ENCODE measurements at regions of chr1 and their contacts with region 1.

Region 1: DNA sequence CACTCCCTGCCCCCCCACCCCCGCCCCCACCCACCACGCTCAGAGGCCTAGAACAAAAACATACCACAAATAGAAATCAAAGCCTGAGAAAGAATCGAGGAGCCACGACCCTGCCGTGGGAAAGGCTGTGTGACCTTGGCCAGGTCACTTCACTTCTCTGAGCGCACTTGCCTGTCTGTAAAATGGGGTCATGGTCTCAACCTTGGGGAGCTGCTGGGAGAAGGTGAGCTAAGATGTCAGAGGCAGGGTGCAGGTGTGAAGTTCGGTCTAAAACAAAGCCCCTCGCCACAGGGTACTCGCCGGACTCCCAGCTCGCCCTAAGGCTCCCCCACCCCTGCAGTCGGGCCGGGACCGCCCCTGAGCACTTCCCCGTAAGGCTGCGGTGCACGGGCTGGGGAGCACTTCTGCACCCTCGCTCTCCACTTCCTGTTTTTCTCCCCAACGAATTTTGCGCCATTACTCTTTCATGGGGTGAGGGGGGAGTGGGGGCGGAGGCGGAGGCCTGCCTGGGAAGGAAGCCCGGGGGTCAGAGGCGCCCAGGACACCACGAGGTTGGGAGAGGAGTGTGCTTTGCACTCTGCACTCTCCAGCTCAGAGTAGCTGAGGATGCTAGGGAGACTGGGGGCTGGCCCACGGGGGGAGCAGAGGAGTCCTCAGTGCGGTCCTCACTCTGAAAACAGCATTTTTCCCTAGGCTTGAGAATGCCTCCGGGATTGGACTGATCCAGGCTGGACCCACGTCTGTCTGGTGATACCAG is 21.9 kb upstream of the PIK3CD start:
- DNase-seq: no peak
- H3K4me3 ChIP-seq: no peak overlapping the region
- CTCF ChIP-seq: no peak

Region 2: GRCh38 chr1:8873506-8874229 is 756.0 kb before region 1 on chr1:
- CTCF ChIA-PET with region 1: no interaction called
- POLR2A ChIA-PET with region 1: no interaction called
- DNase-seq: peak; percentile 86
- H3K4me3 ChIP-seq: peak overlapping the region; percentile 30
- CTCF ChIP-seq: no peak

Region 3: DNA sequence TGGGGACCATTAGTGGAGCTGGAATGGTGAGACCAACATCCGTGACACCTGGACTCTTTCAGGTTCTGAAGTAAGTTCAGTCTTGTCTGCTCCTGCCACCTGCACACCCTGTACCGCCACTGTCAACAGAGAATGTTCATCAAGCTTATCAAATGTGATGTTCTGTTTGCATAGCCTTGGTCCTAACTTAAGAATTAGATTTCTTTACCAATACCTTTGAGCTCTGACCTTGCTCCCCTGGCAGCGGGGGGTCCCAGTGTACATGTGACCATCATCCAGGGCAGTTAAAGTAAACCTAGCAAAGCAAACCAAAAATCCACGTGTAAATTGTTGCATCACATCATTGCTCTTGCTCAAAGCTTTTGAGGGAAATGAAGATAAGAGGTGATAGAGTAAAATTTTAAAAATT is 75.9 kb before region 1 on chr1:
- CTCF ChIA-PET with region 1: no interaction called
- POLR2A ChIA-PET with region 1: no interaction called
- DNase-seq: no peak
- H3K4me3 ChIP-seq: no peak overlapping the region
- CTCF ChIP-seq: no peak

Region 4: DNA sequence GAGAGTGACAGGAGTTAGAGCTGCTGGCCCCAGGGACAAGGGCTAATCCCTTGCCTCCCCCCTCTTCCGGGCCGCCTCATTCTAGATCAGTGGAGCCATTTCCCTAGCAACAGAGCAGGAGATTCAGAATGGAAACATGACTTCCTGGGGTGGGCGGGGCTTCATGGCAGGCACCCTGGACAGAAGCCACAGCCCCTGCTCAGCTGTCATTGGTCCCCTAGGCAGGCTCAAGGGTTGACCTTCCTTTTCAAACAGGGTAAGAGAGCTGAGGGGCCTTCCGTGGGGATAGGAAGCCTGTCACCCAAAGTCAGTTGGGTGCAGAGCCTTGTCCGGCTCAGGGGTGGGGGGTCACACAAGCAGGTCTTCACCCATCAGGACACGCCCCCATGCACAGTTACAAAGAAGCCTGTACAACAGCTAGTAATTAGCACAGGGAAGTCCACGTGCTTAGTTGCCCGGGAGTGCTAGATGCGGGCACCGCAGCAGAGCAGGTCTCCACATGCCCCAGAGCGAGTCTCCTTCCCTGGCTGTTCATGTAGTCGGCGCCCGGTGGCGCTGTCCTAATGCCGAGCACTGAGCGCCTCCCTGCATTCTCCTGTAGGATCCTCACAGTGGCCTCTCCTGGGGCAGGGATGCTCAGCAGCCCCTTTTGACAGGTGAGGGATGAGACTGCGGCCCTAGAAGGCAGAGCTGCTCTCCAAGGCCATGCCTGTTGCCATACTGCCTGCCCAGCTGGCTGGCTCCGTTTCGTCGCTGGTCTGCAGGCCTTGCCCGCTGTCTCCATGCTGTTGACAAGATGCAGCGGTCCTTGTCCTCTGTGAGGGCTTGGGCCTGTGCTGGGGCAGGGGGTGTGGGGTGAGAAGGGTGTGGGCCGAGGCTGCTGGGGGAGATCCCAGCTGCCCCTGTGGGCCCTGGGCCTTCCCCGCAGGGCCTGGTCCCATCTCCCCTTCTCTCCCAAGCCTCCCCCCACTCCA is 35.8 kb before region 1 on chr1:
- CTCF ChIA-PET with region 1: interaction called, 10 read pairs
- POLR2A ChIA-PET with region 1: no interaction called
- DNase-seq: peak; percentile 9
- H3K4me3 ChIP-seq: no peak overlapping the region
- CTCF ChIP-seq: no peak

Region 5: DNA sequence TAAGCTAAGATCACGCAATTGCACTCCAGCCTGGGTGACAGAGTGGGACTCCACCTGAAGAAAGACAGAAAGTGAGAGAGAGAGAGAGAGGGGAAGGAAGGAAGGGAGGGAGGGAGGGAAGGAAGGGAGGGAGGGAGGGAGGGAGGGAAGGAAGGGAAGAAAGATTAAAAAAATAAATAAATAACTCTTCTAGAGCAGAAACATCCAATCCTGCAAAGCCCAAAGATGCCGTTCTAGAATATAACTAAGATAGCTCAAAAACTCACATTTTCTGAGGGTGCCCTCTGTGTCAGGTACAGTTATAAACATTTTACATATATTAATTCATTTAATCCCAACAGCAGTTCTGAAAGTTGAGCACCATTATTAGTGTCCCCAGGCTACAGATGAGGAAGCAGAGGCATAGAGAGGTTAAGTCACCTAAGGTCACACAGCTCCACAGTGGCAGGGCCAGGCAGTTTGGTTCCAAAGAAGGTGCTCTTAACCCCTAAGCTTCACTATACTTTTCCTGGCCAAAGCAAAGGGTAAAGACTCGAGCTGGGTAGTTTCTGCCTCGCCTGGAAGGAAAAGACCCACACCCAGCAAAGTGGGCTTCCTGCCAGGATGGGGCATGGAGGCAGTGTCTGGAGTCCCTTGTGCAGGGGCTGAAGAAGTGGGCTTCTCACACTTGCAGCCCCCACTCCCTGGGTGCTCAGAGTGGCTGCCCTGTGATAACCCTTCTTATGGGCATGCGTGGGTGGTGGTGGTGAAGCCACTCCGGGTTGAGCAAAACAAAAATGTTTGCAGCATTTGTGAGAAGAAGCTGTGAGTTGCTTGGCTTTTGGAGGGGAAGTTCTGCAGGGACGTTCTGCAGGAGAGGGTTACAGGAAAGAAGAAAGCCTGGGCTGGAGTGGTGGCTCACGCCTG is 14.0 kb after region 1 on chr1:
- CTCF ChIA-PET with region 1: interaction called, 122 read pairs
- POLR2A ChIA-PET with region 1: no interaction called
- DNase-seq: no peak
- H3K4me3 ChIP-seq: no peak overlapping the region
- CTCF ChIP-seq: no peak

Region 6: GRCh38 chr1:9689011-9689706 is 59.5 kb after region 1 on chr1:
- CTCF ChIA-PET with region 1: interaction called, 29 read pairs
- POLR2A ChIA-PET with region 1: no interaction called
- DNase-seq: no peak
- H3K4me3 ChIP-seq: peak overlapping the region; percentile 71
- CTCF ChIP-seq: no peak

Region 7: GRCh38 chr1:9717193-9718005 is 87.8 kb after region 1 on chr1:
- CTCF ChIA-PET with region 1: interaction called, 34 read pairs
- POLR2A ChIA-PET with region 1: no interaction called
- DNase-seq: no peak
- H3K4me3 ChIP-seq: no peak overlapping the region
- CTCF ChIP-seq: no peak

Region 8: GRCh38 chr1:9861360-9861759 is 231.7 kb after region 1 on chr1:
- CTCF ChIA-PET with region 1: interaction called, 179 read pairs
- POLR2A ChIA-PET with region 1: no interaction called
- DNase-seq: no peak
- H3K4me3 ChIP-seq: no peak overlapping the region
- CTCF ChIP-seq: no peak

Region 9: DNA sequence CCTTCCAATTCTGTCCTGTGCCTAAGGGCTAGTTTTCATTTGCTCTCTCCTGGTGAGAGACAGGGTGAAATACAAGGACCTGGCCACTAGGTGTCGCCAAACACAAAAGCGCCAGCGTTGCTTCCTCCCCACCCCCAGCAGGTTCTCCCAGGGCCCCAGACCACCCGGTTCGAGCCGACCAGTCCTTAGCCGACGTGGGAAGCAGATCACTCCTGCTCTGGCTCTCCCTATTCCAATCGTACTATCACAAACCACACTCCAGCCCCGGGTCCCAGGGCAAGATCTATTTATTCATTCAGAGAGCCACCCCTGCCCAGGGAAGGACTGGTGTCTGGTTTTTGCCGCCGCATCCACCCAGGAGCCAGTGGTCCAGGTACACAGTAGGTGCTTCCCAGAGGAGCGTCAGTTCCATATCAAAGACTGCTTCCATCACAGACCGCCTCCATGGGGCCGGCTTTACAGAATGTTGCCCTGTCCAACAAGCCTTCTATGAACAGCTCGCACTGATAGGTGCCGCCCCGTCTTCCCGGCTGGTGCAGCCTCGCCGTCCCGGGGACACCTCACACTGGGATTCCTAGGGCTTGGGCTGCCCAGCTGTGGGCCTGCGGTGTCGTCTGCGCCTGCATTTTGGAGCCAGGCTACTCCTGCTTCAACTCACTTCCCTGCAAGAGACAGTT is 245.5 kb after region 1 on chr1:
- CTCF ChIA-PET with region 1: interaction called, 179 read pairs
- POLR2A ChIA-PET with region 1: no interaction called
- DNase-seq: no peak
- H3K4me3 ChIP-seq: no peak overlapping the region
- CTCF ChIP-seq: peak; percentile 80

Region 10: GRCh38 chr1:9960706-9961562 is 331.3 kb after region 1 on chr1:
- CTCF ChIA-PET with region 1: no interaction called
- POLR2A ChIA-PET with region 1: no interaction called
- DNase-seq: no peak
- H3K4me3 ChIP-seq: no peak overlapping the region
- CTCF ChIP-seq: no peak

Region 11: GRCh38 chr1:10007169-10007568 is 377.5 kb after region 1 on chr1:
- CTCF ChIA-PET with region 1: no interaction called
- POLR2A ChIA-PET with region 1: no interaction called
- DNase-seq: no peak
- H3K4me3 ChIP-seq: no peak overlapping the region
- CTCF ChIP-seq: no peak

Measured in AG04449 (cell line).